Ovary (tissue), 10 donors: ENCODE measurements at regions of chr1 and their contacts with region 1.

Region 1: DNA sequence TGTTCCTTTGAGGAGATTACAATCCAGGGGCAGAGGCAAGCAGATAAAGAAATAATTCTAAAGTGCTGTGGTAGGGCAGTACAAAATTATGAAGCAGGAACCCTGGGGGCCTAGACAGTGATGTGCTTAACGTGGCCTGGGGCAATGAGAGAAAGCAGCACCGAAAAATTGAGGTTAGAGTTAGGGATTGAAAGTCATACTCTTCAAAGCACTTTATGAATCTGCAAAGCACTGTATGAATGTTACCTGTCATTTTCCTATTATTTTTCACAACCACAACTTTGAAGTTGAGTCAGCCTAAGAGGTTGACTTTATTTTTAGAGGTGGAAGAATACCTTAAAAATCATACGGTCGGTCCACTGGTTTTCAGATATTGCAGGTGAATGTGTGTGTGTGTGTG is 183.4 kb upstream of the NFIA start:
- DNase-seq: no peak
- H3K4me3 ChIP-seq: no peak overlapping the region
- H3K27ac ChIP-seq: no peak overlapping the region
- H3K4me1 ChIP-seq: no peaks in the 10 kb centered on the region
- H3K27me3 ChIP-seq: no peaks in the 10 kb centered on the region
- CTCF ChIP-seq: no peak
- EP300 ChIP-seq: no peak
- POLR2A ChIP-seq: no peak

Region 2: DNA sequence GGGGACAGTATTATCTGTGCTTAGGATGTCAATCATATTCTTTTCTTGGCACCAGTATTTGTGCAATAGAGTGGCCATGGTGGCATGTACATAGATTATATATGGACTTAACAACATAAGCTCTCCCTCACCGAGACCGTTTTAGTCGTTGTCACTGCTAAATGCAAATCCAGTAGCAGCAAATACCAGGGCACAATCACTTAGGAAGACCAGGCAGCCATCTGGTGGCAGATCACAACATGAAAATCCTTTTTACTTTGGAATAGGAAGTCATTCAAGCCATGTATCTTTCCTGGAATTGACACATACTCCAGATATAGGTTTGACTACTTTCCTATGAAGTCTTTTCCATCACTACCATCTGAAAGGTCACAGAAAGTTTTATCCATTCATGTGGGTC is 772.3 kb before region 1 on chr1:
- intact Hi-C with region 1: loop called in 1 of 4 experiments (anchors 5 kb)
- DNase-seq: no peak
- H3K4me3 ChIP-seq: no peak overlapping the region
- H3K27ac ChIP-seq: no peak overlapping the region
- H3K4me1 ChIP-seq: no peaks in the 10 kb centered on the region
- H3K27me3 ChIP-seq: no peaks in the 10 kb centered on the region
- CTCF ChIP-seq: no peak
- EP300 ChIP-seq: no peak
- POLR2A ChIP-seq: no peak